ENCODE measurements at regions of chr1 and their contacts with region 1.

Region 1: GRCh38 chr1:183267646-183268431 is 81.8 kb downstream of the LAMC2 start:
- DNase-seq: no peak
- ATAC-seq: peak in 7 of 8 donors; percentile 24 to 86 (median 48)
- H3K4me3 ChIP-seq: no peak overlapping the region
- H3K27ac ChIP-seq: peak overlapping the region in 6 of 10 donors; percentile 34 to 74 (median 46)
- H3K4me1 ChIP-seq: peaks cover 0 to 45% (median 22%) of the 10 kb centered on the region in 9 donors
- H3K27me3 ChIP-seq: no peaks in the 10 kb centered on the region
- CTCF ChIP-seq: no peak

Region 2: DNA sequence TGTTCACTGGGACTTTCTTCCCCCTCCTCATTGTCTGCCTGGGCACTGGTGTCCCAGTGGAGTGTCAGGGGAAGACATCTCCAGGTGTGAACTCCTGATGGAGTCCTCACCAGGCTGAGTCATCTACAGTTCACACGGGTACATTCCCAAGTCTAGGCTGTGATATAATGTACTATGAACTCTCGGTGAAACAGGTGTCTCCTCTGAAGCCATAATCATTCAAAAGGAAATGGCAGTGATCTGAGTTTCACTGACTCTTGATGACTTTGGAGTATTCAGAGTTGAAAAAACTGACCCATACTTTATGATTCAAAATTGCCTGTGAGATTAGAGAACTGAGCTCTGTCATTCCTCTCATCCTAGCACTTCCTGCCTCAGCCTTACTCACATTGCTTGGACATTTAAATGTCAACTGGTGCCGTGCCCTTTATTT is 72.7 kb before region 1 on chr1:
- intact Hi-C with region 1: no loop called
- DNase-seq: no peak
- ATAC-seq: peak in 1 of 8 donors; percentile 59
- H3K4me3 ChIP-seq: no peak overlapping the region
- H3K27ac ChIP-seq: peak overlapping the region in 1 of 10 donors; percentile 50
- H3K4me1 ChIP-seq: peaks cover 0 to 11% (median 0%) of the 10 kb centered on the region in 9 donors
- H3K27me3 ChIP-seq: no peaks in the 10 kb centered on the region
- CTCF ChIP-seq: no peak

Region 3: DNA sequence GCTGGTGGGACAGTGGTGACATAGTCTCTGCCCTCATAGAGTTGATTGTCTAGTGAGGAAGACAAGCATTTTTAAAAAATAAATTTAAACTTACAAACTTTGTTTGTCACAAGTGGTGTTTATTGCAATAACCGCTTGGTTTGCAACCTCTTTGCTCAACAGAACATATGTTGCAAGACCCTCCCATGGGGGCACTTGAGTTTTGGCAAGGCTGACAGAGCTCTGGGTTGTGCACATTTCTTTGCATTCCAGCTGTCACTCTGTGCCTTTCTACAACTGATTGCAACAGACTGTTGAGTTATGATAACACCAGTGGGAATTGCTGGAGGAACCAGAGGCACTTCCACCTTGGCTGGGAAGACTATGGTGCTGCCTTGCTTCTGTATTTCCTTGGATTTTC is 23.4 kb before region 1 on chr1:
- intact Hi-C with region 1: loop called in 1 of 10 experiments (anchors 2 kb)
- DNase-seq: peak; percentile 72 to 81
- ATAC-seq: peak in 7 of 8 donors; percentile 22 to 59 (median 54)
- H3K4me3 ChIP-seq: no peak overlapping the region
- H3K27ac ChIP-seq: peak overlapping the region; percentile 49 to 90 (median 76)
- H3K4me1 ChIP-seq: peaks cover 0 to 60% (median 37%) of the 10 kb centered on the region in 9 donors
- H3K27me3 ChIP-seq: no peaks in the 10 kb centered on the region
- CTCF ChIP-seq: no peak

Measured in heart right ventricle (tissue), 16 donors.